ENCODE measurements at regions of chr4 and their contacts with region 1.

Region 1: GRCh38 chr4:25986807-25987206 is 72.8 kb downstream of the SMIM20 start:
- DNase-seq: no peak
- H3K4me3 Mint-ChIP-seq: no peak overlapping the region
- H3K27ac Mint-ChIP-seq: no peak overlapping the region
- H3K4me1 Mint-ChIP-seq: peaks cover 10% of the 10 kb centered on the region
- H3K27me3 Mint-ChIP-seq: no peaks in the 10 kb centered on the region

Region 2: GRCh38 chr4:25703731-25704388 is 282.9 kb before region 1 on chr4:
- intact Hi-C with region 1: no loop called
- DNase-seq: no peak
- H3K4me3 Mint-ChIP-seq: no peak overlapping the region
- H3K27ac Mint-ChIP-seq: no peak overlapping the region
- H3K4me1 Mint-ChIP-seq: no peaks in the 10 kb centered on the region
- H3K27me3 Mint-ChIP-seq: no peaks in the 10 kb centered on the region

Region 3: GRCh38 chr4:25925486-25926201 is 61.2 kb before region 1 on chr4:
- intact Hi-C with region 1: loop called (anchors 5 kb)
- DNase-seq: no peak
- H3K4me3 Mint-ChIP-seq: no peak overlapping the region
- H3K27ac Mint-ChIP-seq: no peak overlapping the region
- H3K4me1 Mint-ChIP-seq: peaks cover 14% of the 10 kb centered on the region
- H3K27me3 Mint-ChIP-seq: no peaks in the 10 kb centered on the region

Region 4: DNA sequence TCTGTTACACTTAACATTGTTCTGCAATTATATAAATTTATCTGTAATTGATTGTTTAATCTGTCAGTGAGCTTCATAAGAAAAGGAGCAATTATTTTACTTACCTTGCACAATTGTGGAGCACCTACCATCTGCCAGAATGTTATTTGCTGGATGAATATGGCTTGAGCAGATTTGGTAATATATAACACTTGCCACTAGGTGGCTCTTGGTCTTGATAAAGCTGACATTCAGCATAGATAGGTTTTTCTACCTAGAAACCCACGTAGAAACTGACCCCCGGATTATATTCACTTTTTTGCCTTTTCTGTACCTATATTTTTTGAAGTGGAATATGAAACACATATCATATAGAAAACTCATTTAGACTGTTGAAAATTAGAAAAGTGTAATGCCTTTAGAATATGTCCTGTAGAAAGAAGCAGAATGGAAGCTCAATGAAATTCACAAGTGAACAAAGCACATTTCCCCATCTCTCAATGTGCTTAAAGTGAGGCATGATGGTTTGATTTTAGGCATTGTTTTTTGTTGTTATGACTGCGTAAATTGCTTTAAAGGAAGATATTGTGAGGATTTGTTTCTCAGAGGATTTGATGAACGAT is 343.5 kb after region 1 on chr4:
- intact Hi-C with region 1: loop called (anchors 5 kb)
- DNase-seq: no peak
- H3K4me3 Mint-ChIP-seq: peak overlapping the region; percentile 4
- H3K27ac Mint-ChIP-seq: peak overlapping the region; percentile 10
- H3K4me1 Mint-ChIP-seq: peaks cover 59% of the 10 kb centered on the region
- H3K27me3 Mint-ChIP-seq: no peaks in the 10 kb centered on the region

Measured in activated T-helper 2 cell treated with anti-CD3 and anti-CD28 coated beads, Interferon-gamma antibody, Interleukin-2, Interleukin-4, amounts not matched to agents 10 μg/mL and 5 μg/mL and 100 μg/mL, durations not matched to agents 14 hours and 24 hours and 36 hours (primary cell).